ENCODE measurements at regions of chr16 and their contacts with region 1.

Region 1: DNA sequence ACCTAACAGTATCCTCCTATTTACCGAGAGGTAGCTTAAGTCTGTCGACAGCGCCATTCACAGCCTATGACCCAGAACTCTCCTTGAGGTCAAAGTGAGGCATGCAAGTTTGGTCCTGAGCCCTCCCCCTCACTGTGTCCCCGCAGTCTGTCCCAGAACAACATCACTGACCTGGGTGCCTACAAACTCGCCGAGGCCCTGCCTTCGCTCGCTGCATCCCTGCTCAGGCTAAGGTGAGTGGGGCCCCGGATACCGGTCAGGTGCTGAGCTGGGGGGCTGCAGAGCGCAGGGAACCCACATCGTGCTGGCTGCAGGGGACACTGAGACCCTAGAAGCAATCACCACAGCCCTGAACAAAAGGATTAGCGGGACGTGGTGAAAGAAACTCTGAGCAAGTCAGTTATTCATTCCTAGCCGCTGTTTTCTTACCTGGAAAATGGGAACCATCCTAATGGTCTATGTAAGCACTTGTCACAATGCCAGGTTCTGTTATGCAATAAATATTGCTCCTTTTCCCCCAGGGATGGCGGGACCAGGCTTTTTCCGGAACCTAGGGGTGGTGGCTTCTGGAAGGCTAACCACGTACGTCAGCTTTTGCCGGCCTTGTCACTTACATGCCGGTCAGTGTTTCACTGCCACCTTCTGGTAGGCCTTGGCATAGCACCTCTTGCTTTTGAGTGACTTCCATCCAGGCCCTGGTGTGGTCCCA is 23.8 kb downstream of the DEXI start:
- DNase-seq: peak; percentile 77
- H3K4me3 ChIP-seq: no peak overlapping the region
- H3K27ac ChIP-seq: no peak overlapping the region
- H3K4me1 ChIP-seq: peaks cover 7% of the 10 kb centered on the region
- H3K27me3 ChIP-seq: no peaks in the 10 kb centered on the region
- CTCF ChIP-seq: peak; percentile 98 to 99

Region 2: DNA sequence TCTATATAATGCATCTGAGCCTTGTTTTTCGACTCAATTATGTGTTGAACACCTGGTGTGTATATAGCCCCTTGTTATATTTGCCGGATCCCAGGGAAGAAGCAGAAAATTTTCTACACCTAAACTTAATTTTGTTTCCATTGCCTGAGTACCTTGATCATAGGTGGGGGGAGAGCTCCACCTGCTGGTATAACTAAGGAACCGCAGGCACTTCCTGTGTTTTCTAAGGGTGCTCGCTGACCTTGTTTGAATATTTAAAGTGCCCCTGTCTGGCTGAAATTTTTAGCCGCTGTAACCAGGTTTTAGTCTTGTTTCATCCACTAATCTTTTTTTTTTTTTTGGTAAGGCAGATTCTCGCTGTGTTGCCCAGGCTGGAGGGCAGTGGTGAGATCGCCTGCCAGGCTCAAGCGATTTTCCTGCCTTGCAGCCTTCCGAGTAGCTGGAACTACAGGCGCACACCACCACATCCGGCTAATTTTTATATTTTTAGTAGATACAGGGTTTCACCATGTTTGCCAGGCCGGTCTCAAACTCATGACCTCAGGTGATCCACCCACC is 181.3 kb before region 1 on chr16:
- CTCF ChIA-PET with region 1: no interaction called
- dilution Hi-C with region 1: no loop called
- in situ Hi-C with region 1: loop called (anchors 10 to 25 kb)
- intact Hi-C with region 1: loop called (anchors 1 kb)
- DNase-seq: peak; percentile 50
- H3K4me3 ChIP-seq: no peak overlapping the region
- H3K27ac ChIP-seq: no peak overlapping the region
- H3K4me1 ChIP-seq: peaks cover 8% of the 10 kb centered on the region
- H3K27me3 ChIP-seq: no peaks in the 10 kb centered on the region
- CTCF ChIP-seq: peak; percentile 85 to 90

Region 3: DNA sequence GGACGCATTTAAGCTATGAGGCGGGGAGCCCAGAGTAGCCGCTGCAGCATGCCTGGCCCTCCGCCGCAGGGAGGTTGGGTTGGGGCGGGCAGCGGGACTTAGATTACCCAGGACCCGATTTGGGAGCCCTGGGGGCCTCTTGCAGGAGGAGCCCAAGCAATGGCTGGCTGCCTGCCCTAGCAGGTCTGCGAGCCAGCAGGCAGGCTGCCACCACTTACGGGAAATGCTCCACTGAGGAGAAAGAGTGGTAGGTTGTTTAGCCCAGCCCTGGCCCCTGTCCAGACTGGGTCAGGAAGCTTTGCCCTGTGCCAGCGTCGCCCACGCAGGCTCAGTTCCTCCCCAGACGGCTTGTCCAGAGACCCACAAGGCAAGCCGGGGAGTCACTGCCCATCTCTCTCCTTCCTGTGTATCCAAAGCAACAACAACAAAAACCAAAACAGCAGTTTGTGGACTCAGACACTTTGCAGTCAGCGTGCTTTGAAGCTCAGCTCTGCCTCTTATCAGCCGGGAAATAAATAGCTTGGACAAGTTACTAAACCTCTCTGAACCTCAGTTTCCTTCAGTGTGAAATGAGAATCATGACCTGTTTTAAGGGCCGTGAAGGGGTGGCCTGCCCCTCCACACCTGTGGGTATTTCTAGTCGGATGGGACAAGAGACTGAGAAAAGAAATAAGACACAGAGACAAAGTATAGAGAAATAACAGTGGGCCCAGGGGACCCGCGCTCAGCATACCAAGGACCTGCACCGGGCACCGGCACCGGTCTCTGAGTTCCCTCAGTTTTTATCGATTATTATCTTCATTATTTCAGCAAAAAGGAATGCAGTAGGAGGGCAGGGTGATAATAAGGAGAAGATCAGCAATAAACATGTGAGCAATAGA is 89.4 kb before region 1 on chr16:
- CTCF ChIA-PET with region 1: no interaction called
- dilution Hi-C with region 1: no loop called
- in situ Hi-C with region 1: no loop called
- intact Hi-C with region 1: loop called (anchors 10 kb)
- DNase-seq: peak; percentile 73
- H3K4me3 ChIP-seq: peak overlapping the region in 1 of 3 experiments; percentile 6
- H3K27ac ChIP-seq: peak overlapping the region; percentile 26
- H3K4me1 ChIP-seq: peaks cover 21% of the 10 kb centered on the region
- H3K27me3 ChIP-seq: no peaks in the 10 kb centered on the region
- CTCF ChIP-seq: no peak

Region 4: DNA sequence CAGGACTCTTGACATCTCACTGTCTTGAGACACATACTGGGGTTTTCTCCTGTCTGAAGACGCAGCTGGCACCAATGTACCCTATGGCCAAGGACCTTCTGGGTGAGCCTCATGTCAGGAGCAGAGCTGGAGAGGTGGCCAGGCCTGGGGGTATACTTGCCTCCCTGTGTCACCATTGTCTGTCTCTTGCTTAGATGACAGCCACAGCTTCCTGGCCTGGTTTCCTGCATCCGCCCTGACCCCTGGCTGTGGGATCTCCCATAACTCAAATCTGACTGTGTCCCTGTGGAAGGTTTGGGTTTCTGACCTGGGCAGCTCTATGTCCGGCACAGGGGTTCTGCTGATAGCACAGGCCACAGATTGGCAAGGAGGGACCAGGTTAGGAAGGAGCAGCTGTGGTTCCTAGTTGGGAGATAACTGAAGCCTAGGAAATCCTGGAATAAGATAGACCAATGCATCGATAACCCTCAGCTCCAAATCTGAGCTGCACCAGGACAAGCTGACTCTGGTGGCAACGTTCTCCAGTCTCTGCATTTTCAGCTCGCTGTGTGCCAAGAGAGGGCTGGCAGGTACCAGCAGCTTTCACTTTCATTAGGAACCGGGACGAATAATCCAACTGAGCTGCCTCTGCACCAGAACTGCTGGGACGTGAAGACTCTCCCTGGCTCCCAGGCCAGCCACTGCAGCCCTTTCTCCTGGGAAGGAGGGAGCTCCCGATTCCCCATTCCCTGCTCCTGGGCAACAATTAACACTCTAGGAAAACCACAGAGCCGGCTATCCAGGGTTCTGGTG is 18.8 kb after region 1 on chr16:
- CTCF ChIA-PET with region 1: no interaction called
- dilution Hi-C with region 1: no loop called
- in situ Hi-C with region 1: no loop called
- intact Hi-C with region 1: no loop called
- DNase-seq: no peak
- H3K4me3 ChIP-seq: no peak overlapping the region
- H3K27ac ChIP-seq: no peak overlapping the region
- H3K4me1 ChIP-seq: peaks cover 27% of the 10 kb centered on the region
- H3K27me3 ChIP-seq: no peaks in the 10 kb centered on the region
- CTCF ChIP-seq: no peak